OCI-LY7 (cell line): ENCODE measurements at regions of chr6 and their contacts with region 1.

Region 1: GRCh38 chr6:158644231-158645063 is at the start of gene DYNLT1:
- DNase-seq: peak; percentile 85
- H3K4me3 ChIP-seq: peak within 1 kb of the TSS; percentile 91
- H3K27ac ChIP-seq: peak within 1 kb of the TSS; percentile 31
- H3K4me1 ChIP-seq: peaks cover 18% of the 10 kb centered on the region
- CTCF ChIP-seq: no peak
- total RNA-seq, gene DYNLT1: 23.9 and 29.3 TPM in 2 replicates

Region 2: DNA sequence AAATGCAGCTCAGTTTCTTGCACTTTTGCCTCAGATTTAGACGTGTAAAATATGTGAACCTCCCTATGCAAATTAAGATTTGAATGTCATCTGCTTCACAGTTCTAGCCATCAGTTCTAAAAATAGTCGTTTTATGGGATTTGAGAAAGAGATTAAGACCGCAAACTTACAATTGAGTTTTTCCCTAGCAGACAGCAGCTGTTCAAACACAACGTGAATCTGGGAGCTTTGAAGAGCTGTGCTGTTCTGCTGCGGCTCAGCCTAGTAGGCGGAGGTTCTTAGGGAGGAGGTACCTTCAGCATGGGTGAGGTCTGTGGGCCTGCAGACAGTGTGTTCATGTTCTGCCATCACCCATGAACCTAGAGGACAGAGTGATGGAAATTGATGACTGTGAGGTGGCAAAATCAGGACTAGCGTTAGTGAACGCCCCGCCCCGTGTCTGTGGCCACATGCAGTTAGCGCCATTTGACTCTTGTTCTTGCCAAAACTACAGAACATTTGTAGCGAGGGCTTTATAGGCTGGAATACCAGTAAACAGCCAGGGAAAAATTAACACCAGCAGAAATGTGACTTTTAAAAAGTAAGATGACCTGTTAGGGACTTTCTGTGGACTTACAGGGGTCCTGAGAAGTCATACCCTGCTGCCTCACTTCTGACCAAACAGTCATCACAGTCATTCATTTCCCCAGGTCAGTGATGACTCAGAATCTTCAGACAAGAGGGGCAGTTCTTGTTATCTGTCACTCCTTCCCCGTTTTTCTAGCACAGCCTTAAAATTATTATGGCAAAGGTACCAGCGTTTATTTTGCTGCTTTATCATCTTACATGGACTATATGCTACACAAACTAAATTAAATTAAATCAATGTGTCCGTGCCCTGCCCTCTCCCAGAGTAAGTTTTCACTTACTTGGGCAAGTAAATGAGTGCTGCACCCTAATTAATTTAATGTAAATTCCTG is 168.8 kb before region 1 on chr6:
- CTCF ChIA-PET with region 1: no interaction called
- POLR2A ChIA-PET with region 1: no interaction called
- intact Hi-C with region 1: no loop called
- DNase-seq: no peak
- H3K4me3 ChIP-seq: no peak overlapping the region
- H3K27ac ChIP-seq: no peak overlapping the region
- H3K4me1 ChIP-seq: no peaks in the 10 kb centered on the region
- CTCF ChIP-seq: no peak

Region 3: GRCh38 chr6:158660333-158660754 is 15.9 kb after region 1 on chr6:
- CTCF ChIA-PET with region 1: interaction called, 5 read pairs
- POLR2A ChIA-PET with region 1: interaction called, 14 read pairs
- intact Hi-C with region 1: no loop called
- DNase-seq: peak; percentile 67
- H3K4me3 ChIP-seq: no peak overlapping the region
- H3K27ac ChIP-seq: no peak overlapping the region
- H3K4me1 ChIP-seq: no peaks in the 10 kb centered on the region
- CTCF ChIP-seq: peak; percentile 83

Region 4: DNA sequence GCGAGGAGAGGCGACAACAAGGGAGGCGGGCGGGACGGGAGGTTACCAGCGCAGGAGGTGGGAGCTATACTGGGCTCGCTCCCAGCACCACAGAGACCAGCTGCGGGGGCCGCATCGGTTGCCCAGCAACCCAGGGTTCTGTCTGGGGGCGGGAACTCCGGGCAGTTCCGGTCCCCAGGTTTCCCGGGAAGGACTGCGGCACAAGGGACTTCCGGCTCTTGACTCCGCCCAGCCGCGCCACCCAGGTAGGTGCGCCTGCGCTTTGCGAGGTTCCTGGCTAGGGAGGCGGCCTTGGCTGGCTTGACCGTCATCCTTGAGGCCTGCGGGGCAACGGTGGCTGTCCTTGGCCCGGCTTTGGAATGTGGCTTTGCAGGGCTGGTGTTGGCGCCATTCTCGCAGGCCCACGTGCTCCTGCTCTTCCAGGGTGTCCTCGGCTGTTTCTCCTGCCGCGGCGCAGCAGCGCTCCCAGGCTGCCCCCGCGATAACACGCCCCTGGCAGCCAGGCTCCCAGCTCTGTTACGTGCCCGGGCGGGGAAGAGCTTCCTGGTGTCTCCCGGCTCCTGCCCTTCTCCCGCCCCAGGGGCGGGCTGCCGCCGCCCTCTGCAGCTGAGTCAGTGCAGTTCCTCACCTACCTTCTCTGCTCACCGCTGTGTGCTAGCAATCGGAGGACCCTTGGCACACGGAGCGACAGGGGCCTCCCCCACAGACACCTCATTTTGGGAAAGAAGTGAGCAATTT is 355.4 kb after region 1 on chr6 and contains the start of gene RSPH3:
- CTCF ChIA-PET with region 1: no interaction called
- POLR2A ChIA-PET with region 1: no interaction called
- intact Hi-C with region 1: no loop called
- DNase-seq: peak; percentile 95
- H3K4me3 ChIP-seq: peak within 1 kb of the TSS; percentile 75
- H3K27ac ChIP-seq: peak within 1 kb of the TSS; percentile 65
- H3K4me1 ChIP-seq: peaks cover 17% of the 10 kb centered on the region
- CTCF ChIP-seq: peak; percentile 44; the same call in 1 of the 2 replicates
- total RNA-seq, gene RSPH3: 2.7 TPM in 2 replicates

Region 5: GRCh38 chr6:159505140-159505922 is 860.9 kb after region 1 on chr6:
- CTCF ChIA-PET with region 1: no interaction called
- POLR2A ChIA-PET with region 1: no interaction called
- intact Hi-C with region 1: no loop called
- DNase-seq: no peak
- H3K4me3 ChIP-seq: no peak overlapping the region
- H3K27ac ChIP-seq: no peak overlapping the region
- H3K4me1 ChIP-seq: no peaks in the 10 kb centered on the region
- CTCF ChIP-seq: no peak